Activated CD4-positive, alpha-beta T cell treated with anti-CD3 and anti-CD28 coated beads for 36 hours (primary cell): ENCODE measurements at regions of chr11 and their contacts with region 1.

Region 1: DNA sequence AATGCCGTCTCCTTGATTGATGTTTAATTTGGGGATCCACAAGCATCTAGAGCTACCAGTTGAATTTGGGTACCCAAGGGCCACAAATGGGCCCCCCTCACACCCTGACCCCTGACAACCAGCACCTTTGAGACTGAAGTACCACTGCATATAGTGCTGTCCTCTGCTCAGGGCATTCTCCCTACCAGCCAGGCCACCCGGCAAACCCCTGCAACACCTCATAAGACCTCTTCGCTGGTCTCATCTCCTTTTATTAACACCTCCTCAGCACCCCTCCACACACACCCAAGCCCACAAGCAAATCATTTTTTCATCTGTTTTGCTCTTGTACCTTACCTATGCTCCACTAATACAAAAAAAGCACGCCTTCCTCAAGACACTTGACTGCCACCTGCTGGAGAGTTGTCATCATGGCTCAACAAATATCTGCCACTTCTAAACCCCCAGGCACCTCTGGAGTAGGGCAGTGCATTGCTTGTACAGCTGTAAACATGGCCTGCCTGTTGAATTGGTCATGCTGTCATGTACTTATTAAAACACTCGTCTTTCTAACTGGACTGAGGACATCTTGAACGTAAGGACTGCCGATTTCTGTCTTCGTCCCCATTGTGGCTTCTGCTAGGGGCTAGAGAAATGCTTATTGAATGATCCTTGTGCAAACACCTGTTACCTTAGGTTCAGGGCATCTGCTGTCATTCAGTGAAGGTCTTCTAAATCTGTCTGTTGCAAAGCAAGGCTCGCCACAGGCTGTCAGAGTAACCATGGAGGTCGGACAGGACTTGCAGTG is 66.5 kb downstream of the BMAL1 start:
- DNase-seq: peak; percentile 84
- ATAC-seq: peak; percentile 70
- H3K4me3 Mint-ChIP-seq: no peak overlapping the region
- H3K27ac Mint-ChIP-seq: peak overlapping the region; percentile 49
- H3K4me1 Mint-ChIP-seq: peaks cover 37% of the 10 kb centered on the region
- H3K27me3 Mint-ChIP-seq: no peaks in the 10 kb centered on the region

Region 2: DNA sequence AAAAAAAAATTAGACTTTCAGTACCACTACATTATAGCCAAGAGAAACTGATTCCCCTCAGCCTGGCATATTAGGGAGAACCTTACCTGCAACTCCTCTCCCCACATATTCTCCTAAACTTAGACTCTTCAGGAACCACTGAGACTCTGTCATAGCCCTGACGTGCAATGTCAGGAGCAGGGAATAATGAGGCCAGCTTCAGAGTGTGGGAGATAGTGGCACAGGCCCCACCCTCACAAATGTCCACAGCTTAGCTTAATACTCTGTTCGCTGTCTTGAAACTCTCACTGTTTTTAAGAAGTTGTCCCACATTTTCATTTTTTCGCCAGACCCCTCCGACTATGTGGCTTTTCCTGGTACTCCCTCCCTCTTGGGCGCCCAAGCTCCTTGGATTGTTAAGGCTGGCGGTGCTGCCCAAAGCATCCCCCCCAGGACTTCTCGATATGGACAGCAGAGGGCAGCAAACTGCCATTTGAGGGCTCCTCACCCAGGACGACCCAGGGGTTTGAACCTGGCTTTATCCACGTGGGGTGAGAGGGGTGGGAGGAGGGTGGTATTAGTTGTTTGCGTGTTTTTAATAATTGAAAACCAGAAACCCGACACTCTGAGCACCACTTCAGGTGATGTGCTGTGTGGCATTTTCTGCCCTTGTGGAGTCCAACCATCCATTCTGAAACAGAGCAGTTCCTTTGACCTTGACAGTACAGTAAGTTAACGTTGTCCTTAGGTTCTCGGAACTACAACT is 380.2 kb before region 1 on chr11:
- CTCF ChIA-PET with region 1: interaction called, 8 read pairs
- POLR2A ChIA-PET with region 1: no interaction called
- intact Hi-C with region 1: loop called (anchors 1 kb)
- DNase-seq: peak; percentile 78
- ATAC-seq: peak; percentile 89
- H3K4me3 Mint-ChIP-seq: no peak overlapping the region
- H3K27ac Mint-ChIP-seq: no peak overlapping the region
- H3K4me1 Mint-ChIP-seq: no peaks in the 10 kb centered on the region
- H3K27me3 Mint-ChIP-seq: peaks cover 22% of the 10 kb centered on the region

Region 3: DNA sequence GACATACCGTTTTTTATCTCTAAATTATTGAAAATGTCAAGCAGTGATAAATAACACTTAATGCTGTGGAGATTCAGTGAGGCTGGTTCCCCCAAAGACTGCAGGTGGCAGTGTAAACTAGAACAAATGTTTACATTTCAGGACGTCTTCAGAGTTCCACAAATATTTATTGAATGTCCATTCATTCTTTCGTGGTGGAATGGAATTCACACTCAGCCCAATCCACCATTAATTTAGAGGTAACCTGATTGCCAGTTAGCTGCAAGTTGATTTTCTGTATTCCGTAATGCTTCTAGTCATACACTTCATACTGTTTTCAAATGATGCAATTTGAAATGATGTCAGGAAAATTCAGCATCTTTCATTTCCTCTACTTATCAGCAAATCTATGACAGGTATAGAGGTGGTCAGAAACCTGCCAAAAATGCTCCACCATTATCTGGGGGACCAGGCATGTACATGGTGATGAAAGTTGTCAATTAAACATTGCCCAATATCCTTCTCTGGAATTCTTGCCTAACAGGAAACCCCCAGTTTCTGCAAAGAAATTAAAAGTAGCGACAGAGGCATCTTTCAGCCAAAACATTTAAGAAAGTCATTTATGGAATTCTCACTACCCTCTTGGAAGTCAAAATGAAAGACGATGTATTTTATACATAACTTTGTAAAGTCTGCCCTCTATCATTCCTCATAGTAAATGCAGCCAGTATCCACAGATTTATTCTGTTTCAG is 160.9 kb before region 1 on chr11:
- CTCF ChIA-PET with region 1: interaction called, 7 read pairs
- POLR2A ChIA-PET with region 1: no interaction called
- intact Hi-C with region 1: loop called (anchors 1 to 2 kb)
- DNase-seq: peak; percentile 11
- ATAC-seq: peak; percentile 71
- H3K4me3 Mint-ChIP-seq: no peak overlapping the region
- H3K27ac Mint-ChIP-seq: no peak overlapping the region
- H3K4me1 Mint-ChIP-seq: peaks cover 10% of the 10 kb centered on the region
- H3K27me3 Mint-ChIP-seq: peaks cover 19% of the 10 kb centered on the region

Region 4: GRCh38 chr11:13210424-13210823 is 133.7 kb before region 1 on chr11:
- CTCF ChIA-PET with region 1: interaction called, 11 read pairs
- POLR2A ChIA-PET with region 1: no interaction called
- intact Hi-C with region 1: loop called (anchors 1 kb)
- DNase-seq: peak; percentile 48
- ATAC-seq: no peak
- H3K4me3 Mint-ChIP-seq: no peak overlapping the region
- H3K27ac Mint-ChIP-seq: no peak overlapping the region
- H3K4me1 Mint-ChIP-seq: peaks cover 38% of the 10 kb centered on the region
- H3K27me3 Mint-ChIP-seq: peaks cover 2% of the 10 kb centered on the region

Region 5: DNA sequence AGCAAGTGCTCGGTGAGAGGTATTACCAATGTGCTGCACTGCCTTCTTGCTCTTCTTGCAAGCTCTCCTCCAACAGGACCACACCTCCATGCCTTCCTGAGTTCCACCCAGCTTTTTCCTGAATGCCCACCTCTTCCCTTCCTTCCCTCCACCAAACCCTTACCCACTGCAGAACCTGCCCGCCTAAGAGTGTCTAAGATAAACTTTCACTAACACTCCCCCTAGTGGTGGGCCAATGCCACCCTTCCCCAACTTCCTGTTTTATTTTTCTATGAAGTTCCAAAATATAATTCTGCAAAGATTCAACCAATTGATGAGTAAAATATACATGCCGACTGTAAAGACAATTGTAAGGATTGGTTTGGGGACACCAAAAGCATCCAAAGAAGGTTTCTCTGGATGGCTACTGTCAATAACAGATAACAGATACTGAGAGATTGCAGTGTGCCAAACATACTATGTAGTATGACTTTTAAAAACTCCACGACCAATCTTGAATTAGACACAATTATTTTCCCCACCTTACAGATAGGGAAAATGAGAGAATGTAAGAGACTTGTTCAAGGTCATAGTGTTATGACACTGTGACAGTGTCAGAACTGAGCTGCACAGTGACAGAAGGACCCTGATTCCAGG is 105.1 kb before region 1 on chr11:
- CTCF ChIA-PET with region 1: interaction called, 8 read pairs
- POLR2A ChIA-PET with region 1: no interaction called
- intact Hi-C with region 1: loop called in 1 of 2 experiments (anchors 2 kb)
- DNase-seq: peak; percentile 70
- ATAC-seq: peak; percentile 70
- H3K4me3 Mint-ChIP-seq: no peak overlapping the region
- H3K27ac Mint-ChIP-seq: no peak overlapping the region
- H3K4me1 Mint-ChIP-seq: no peaks in the 10 kb centered on the region
- H3K27me3 Mint-ChIP-seq: peaks cover 8% of the 10 kb centered on the region

Region 6: DNA sequence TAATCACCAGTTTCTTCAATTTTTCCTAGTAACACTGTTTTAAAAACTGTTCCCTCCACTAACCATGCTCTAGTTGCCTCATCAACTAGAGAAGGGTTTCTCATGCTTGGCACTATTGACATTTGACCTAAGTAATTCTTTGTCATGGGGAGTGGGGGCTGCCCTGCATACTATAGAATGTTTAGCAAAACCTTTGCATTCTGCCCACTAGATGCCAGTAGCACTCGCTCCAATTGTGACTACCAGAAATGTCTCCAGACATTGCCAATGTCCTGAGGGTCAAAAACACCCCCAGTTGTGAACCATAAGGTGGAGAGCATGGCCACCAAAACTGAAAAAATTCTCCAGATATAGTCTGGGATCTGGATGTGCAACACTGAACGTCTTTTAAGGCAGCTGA is 94.1 kb before region 1 on chr11:
- CTCF ChIA-PET with region 1: interaction called, 18 read pairs
- POLR2A ChIA-PET with region 1: no interaction called
- intact Hi-C with region 1: loop called in 1 of 2 experiments (anchors 2 kb)
- DNase-seq: peak; percentile 14
- ATAC-seq: no peak
- H3K4me3 Mint-ChIP-seq: no peak overlapping the region
- H3K27ac Mint-ChIP-seq: no peak overlapping the region
- H3K4me1 Mint-ChIP-seq: no peaks in the 10 kb centered on the region
- H3K27me3 Mint-ChIP-seq: peaks cover 8% of the 10 kb centered on the region